ENCODE measurements at regions of chr19 and their contacts with region 1.

Region 1: GRCh38 chr19:1113033-1113985 is 9.5 kb downstream of the GPX4 start:
- DNase-seq: peak; percentile 97 to 99
- ATAC-seq: peak; percentile 87

Region 2: GRCh38 chr19:1183534-1184172 is 70.3 kb after region 1 on chr19:
- intact Hi-C with region 1: loop called in 1 of 2 experiments (anchors 5 kb)
- DNase-seq: peak; percentile 57 to 76
- ATAC-seq: peak; percentile 72

Region 3: GRCh38 chr19:1189419-1189818 is 76.1 kb after region 1 on chr19:
- intact Hi-C with region 1: loop called (anchors 5 kb)
- DNase-seq: no peak
- ATAC-seq: no peak

Measured in left colon (tissue), 2 donors.